CD8-positive, alpha-beta T cell (primary cell): ENCODE measurements at regions of chr13 and their contacts with region 1.

Region 1: GRCh38 chr13:52665325-52665724 is 12.7 kb downstream of the SUGT1 start:
- DNase-seq: peak in 2 of 9 experiments; percentile 42 to 53
- ATAC-seq: peak; percentile 71
- H3K4me3 ChIP-seq: no peak overlapping the region
- H3K4me3 Mint-ChIP-seq: no peak overlapping the region
- H3K27ac ChIP-seq: no peak overlapping the region
- H3K27ac Mint-ChIP-seq: no peak overlapping the region
- H3K4me1 ChIP-seq: no peaks in the 10 kb centered on the region
- H3K4me1 Mint-ChIP-seq: peaks cover 5% of the 10 kb centered on the region
- H3K27me3 ChIP-seq: no peaks in the 10 kb centered on the region
- H3K27me3 Mint-ChIP-seq: no peaks in the 10 kb centered on the region
- CTCF ChIP-seq: peak; percentile 49

Region 2: GRCh38 chr13:52187029-52187423 is 478.3 kb before region 1 on chr13:
- CTCF ChIA-PET with region 1: no interaction called
- POLR2A ChIA-PET with region 1: no interaction called
- intact Hi-C with region 1: loop called in 1 of 2 experiments (anchors 5 kb)
- DNase-seq: no peak
- ATAC-seq: no peak
- H3K4me3 ChIP-seq: no peak overlapping the region
- H3K4me3 Mint-ChIP-seq: no peak overlapping the region
- H3K27ac ChIP-seq: no peak overlapping the region
- H3K27ac Mint-ChIP-seq: peak overlapping the region; percentile 22
- H3K4me1 ChIP-seq: peaks cover 12% of the 10 kb centered on the region
- H3K4me1 Mint-ChIP-seq: peaks cover 33% of the 10 kb centered on the region
- H3K27me3 ChIP-seq: no peaks in the 10 kb centered on the region
- H3K27me3 Mint-ChIP-seq: no peaks in the 10 kb centered on the region
- CTCF ChIP-seq: no peak

Region 3: DNA sequence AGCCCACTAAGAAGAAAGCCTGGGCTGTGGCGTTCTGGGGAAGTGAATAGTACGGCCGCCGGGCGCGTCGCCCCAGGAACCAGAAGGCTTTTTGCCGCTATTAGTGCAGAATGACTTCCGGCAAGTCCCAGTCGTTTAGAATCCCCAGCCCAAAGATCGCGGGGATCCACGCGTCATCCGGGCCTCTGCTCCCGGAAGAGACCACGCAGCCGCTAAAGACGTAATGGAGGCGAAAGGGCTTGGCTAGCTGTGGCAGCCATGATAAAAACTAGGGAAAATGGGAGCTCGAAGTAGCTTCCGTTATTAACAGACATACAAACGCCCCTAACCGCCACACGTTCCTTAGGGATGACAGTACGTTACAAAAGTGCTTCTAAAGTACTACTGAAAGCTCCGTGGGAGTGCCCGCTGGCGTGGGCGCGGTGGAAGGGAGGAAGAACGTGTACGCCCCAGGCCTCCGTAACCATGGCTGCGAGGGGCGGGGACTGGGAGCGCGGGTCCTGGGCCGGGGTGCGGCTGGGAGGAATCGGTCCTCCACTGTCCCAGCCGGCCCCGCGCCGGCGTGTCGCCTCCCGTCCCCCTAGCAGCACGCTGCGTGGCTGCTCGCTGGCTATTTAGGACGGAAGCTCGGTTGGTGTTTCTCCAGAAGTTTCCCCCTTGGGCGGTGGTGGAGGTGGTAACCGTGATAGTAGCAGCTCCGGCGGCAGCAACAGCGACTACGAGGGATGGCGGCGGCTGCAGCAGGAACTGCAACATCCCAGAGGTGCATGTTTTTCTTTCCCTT is 12.9 kb before region 1 on chr13 and contains the start of gene SUGT1:
- CTCF ChIA-PET with region 1: interaction called, 15 read pairs
- POLR2A ChIA-PET with region 1: interaction called, 5 read pairs
- intact Hi-C with region 1: no loop called
- DNase-seq: peak; percentile 88 to 98 (median 95)
- ATAC-seq: peak; percentile 92
- H3K4me3 ChIP-seq: peak within 1 kb of the TSS; percentile 70 to 87
- H3K4me3 Mint-ChIP-seq: no peak within 1 kb of the TSS
- H3K27ac ChIP-seq: peak within 1 kb of the TSS; percentile 94 to 96
- H3K27ac Mint-ChIP-seq: no peak within 1 kb of the TSS
- H3K4me1 ChIP-seq: peaks cover 32% of the 10 kb centered on the region
- H3K4me1 Mint-ChIP-seq: peaks cover 7% of the 10 kb centered on the region
- H3K27me3 ChIP-seq: no peaks in the 10 kb centered on the region
- H3K27me3 Mint-ChIP-seq: no peaks in the 10 kb centered on the region
- CTCF ChIP-seq: peak; percentile 68
- total RNA-seq, gene SUGT1: 17.8 to 20.0 TPM